Adrenal gland (tissue), 19 donors: ENCODE measurements at regions of chr2 and their contacts with region 1.

Region 1: GRCh38 chr2:46008091-46008870 is 288.9 kb upstream of the EPAS1 start:
- DNase-seq: no peak
- H3K4me3 ChIP-seq: no peak overlapping the region
- H3K27ac ChIP-seq: no peak overlapping the region
- H3K4me1 ChIP-seq: peaks cover 0 to 5% of the 10 kb centered on the region in 2 donors
- H3K27me3 ChIP-seq: no peaks in the 10 kb centered on the region
- CTCF ChIP-seq: no peak
- POLR2A ChIP-seq: no peak

Region 2: GRCh38 chr2:46029332-46029811 is 21.1 kb after region 1 on chr2:
- intact Hi-C with region 1: no loop called
- DNase-seq: no peak
- H3K4me3 ChIP-seq: no peak overlapping the region
- H3K27ac ChIP-seq: peak overlapping the region in 1 of 5 donors; percentile 28
- H3K4me1 ChIP-seq: peaks cover 0 to 18% of the 10 kb centered on the region in 2 donors
- H3K27me3 ChIP-seq: no peaks in the 10 kb centered on the region
- CTCF ChIP-seq: no peak
- POLR2A ChIP-seq: no peak

Region 3: GRCh38 chr2:46364797-46365457 is 356.6 kb after region 1 on chr2:
- intact Hi-C with region 1: loop called (anchors 5 kb)
- DNase-seq: peak in 5 of 7 donors; percentile 28 to 73 (median 58)
- H3K4me3 ChIP-seq: no peak overlapping the region
- H3K27ac ChIP-seq: no peak overlapping the region
- H3K4me1 ChIP-seq: no peaks in the 10 kb centered on the region
- H3K27me3 ChIP-seq: no peaks in the 10 kb centered on the region
- CTCF ChIP-seq: peak; percentile 68 to 86 (median 80)
- POLR2A ChIP-seq: no peak